A673 (cell line): ENCODE measurements at regions of chr6 and their contacts with region 1.

Region 1: GRCh38 chr6:82363351-82364086 is at the start of gene TPBG:
- DNase-seq: peak; percentile 86
- H3K4me3 ChIP-seq: peak within 1 kb of the TSS; percentile 83
- H3K27ac ChIP-seq: peak within 1 kb of the TSS; percentile 95
- H3K4me1 ChIP-seq: peaks cover 40% of the 10 kb centered on the region
- H3K27me3 ChIP-seq: no peaks in the 10 kb centered on the region
- CTCF ChIP-seq: peak; percentile 51
- total RNA-seq, gene TPBG: 66.4 and 67.1 TPM in 2 replicates

Region 2: GRCh38 chr6:82458147-82458546 is 94.6 kb after region 1 on chr6:
- CTCF ChIA-PET with region 1: no interaction called
- POLR2A ChIA-PET with region 1: no interaction called
- intact Hi-C with region 1: no loop called
- DNase-seq: no peak
- H3K4me3 ChIP-seq: no peak overlapping the region
- H3K27ac ChIP-seq: no peak overlapping the region
- H3K4me1 ChIP-seq: no peaks in the 10 kb centered on the region
- H3K27me3 ChIP-seq: no peaks in the 10 kb centered on the region
- CTCF ChIP-seq: no peak

Region 3: GRCh38 chr6:82616386-82617028 is 253.0 kb after region 1 on chr6:
- CTCF ChIA-PET with region 1: no interaction called
- POLR2A ChIA-PET with region 1: interaction called, 3 read pairs
- intact Hi-C with region 1: loop called (anchors 2 kb)
- DNase-seq: peak; percentile 93
- H3K4me3 ChIP-seq: peak overlapping the region; percentile 4
- H3K27ac ChIP-seq: peak overlapping the region; percentile 59
- H3K4me1 ChIP-seq: peaks cover 60% of the 10 kb centered on the region
- H3K27me3 ChIP-seq: no peaks in the 10 kb centered on the region
- CTCF ChIP-seq: peak; percentile 47; the same call in 1 of the 2 replicates